Thyroid gland (tissue), 4 donors: ENCODE measurements at regions of chr7 and their contacts with region 1.

Region 1: GRCh38 chr7:32221736-32222135 is 151.5 kb upstream of the PDE1C start:
- DNase-seq: no peak
- H3K4me3 ChIP-seq: no peak overlapping the region
- H3K27ac ChIP-seq: no peak overlapping the region
- H3K4me1 ChIP-seq: no peaks in the 10 kb centered on the region
- H3K27me3 ChIP-seq: no peaks in the 10 kb centered on the region
- CTCF ChIP-seq: no peak
- POLR2A ChIP-seq: no peak

Region 2: DNA sequence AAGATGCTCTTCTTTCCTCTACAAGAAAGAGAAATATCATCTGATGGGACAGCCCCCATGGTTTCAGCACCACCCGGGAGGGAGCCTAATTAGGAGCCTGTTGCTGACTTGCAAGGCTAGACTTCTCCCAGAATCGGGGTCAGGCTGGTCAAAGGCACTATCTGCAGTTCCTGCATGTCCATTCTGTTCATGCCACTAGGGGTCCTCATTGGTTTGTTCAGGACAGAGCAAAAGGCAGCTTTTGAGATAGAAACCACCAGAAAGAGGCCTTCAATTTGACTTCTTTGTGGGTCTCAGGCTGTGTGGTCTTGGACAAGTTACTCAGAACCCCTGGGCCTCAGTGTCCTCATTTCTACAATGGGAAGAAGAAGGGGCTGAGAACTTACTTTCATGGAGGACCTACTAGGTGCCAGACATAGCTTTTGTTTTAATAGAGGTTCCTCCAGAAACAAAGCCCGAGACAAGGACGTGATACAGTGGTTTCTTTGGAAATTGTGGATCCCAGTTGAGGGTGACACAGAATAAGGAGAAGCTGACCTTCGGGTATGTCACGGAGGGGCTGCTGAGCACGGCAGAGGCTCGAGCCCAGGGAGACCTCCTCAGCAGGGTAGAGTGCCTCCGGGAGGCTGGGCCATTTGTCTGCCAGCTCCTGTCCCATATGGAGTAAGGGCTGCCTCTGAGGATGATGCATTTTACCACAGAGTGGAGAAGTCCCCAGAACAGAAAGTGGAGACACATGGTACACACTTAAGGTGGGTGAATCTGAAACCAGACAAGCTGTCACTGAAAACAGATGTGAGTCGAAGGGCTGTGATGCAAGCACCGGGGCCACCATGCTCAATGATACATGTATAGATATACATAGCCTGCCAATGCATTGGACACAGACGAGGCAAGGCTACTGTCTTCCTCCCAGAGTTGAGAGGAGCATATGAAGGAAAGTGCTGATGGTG is 848.1 kb before region 1 on chr7:
- intact Hi-C with region 1: no loop called
- DNase-seq: no peak
- H3K4me3 ChIP-seq: no peak overlapping the region
- H3K27ac ChIP-seq: no peak overlapping the region
- H3K4me1 ChIP-seq: no peaks in the 10 kb centered on the region
- H3K27me3 ChIP-seq: no peaks in the 10 kb centered on the region
- CTCF ChIP-seq: peak in 1 of 6 experiments; percentile 27
- POLR2A ChIP-seq: no peak

Region 3: DNA sequence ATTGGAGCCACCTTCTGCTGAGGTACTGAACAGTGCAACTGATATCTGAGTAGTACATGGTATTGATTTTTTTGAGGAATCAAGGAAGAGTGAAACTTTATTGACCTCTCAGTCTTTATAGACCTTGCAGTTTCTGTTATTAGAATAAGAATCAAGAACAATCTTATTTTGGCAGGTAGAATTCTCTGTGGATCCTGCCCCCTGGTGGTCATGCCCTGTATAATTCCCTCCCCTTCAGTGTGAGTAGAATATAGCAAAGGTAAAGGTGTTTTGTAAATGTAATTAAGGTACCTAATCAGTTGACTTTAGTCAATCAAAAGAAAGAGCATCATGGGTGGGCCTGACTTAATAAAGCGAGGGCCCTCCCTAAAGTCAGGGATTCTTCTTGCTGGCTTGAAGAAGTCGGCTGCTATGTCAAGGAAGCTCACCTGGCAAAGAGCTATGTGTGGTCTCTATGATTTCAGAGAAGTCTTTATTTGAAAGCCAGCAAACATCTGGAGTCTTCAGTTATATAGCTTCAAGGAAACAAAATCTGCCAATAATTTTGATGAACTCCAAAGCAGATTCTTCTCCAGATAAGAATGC is 125.6 kb after region 1 on chr7:
- intact Hi-C with region 1: loop called (anchors 10 kb)
- DNase-seq: peak in 1 of 2 donors; percentile 21
- H3K4me3 ChIP-seq: no peak overlapping the region
- H3K27ac ChIP-seq: no peak overlapping the region
- H3K4me1 ChIP-seq: no peaks in the 10 kb centered on the region
- H3K27me3 ChIP-seq: no peaks in the 10 kb centered on the region
- CTCF ChIP-seq: peak in 3 of 6 experiments; percentile 8 to 55 (median 23)
- POLR2A ChIP-seq: no peak